Activated naive CD4-positive, alpha-beta T cell treated with anti-CD3 and anti-CD28 coated beads for 36 hours (primary cell): ENCODE measurements at regions of chr5 and their contacts with region 1.

Region 1: GRCh38 chr5:124524552-124525232 is 221.7 kb downstream of the ZNF608 start:
- DNase-seq: no peak
- H3K4me3 Mint-ChIP-seq: no peak overlapping the region
- H3K27ac Mint-ChIP-seq: no peak overlapping the region
- H3K4me1 Mint-ChIP-seq: no peaks in the 10 kb centered on the region
- H3K27me3 Mint-ChIP-seq: no peaks in the 10 kb centered on the region

Region 2: GRCh38 chr5:124583469-124584350 is 59.0 kb after region 1 on chr5:
- CTCF ChIA-PET with region 1: no interaction called
- intact Hi-C with region 1: loop called (anchors 5 kb)
- DNase-seq: peak; percentile 26
- H3K4me3 Mint-ChIP-seq: no peak overlapping the region
- H3K27ac Mint-ChIP-seq: no peak overlapping the region
- H3K4me1 Mint-ChIP-seq: peaks cover 17% of the 10 kb centered on the region
- H3K27me3 Mint-ChIP-seq: no peaks in the 10 kb centered on the region